ENCODE measurements at regions of chr2 and their contacts with region 1.

Region 1: DNA sequence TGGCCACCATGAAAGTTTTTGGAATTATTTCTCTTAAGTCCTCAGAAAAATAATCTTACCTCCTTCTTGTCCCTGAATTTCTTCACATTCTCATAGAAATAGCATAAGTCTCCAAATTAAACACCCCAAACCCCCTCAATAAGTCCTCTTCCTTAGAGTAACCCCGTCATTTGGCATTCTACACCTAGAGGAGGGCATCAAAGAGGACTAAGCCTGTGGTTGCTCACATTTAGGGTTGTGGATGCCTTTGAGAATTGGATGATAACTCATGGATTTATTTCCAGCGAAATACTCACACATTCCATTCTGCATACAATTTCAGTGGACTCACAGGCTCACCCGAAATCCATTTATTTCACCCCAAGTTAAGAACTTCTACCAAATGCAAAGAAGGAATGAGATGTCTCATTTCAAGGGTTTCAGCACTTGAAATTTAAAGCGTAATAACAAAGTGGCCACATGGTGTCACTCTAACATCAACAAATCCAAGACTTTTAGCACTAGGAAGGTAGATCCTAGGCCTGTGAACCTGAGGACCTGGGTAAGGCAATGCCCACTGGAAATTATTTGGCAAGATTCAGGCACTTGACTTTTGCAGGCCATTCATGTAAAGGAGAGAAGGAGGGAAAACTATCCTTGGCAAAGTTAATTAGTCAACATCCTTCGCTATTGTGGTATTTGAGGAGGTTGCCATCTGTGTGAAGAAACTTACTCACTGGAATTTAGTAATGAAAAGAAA is 24.6 kb downstream of the DYTN start:
- DNase-seq: peak; percentile 69
- H3K4me3 ChIP-seq: no peak overlapping the region
- H3K27ac ChIP-seq: no peak overlapping the region
- H3K4me1 ChIP-seq: no peaks in the 10 kb centered on the region
- H3K27me3 ChIP-seq: peaks cover 22% of the 10 kb centered on the region
- CTCF ChIP-seq: peak; percentile 71

Region 2: GRCh38 chr2:206783718-206784117 is 90.2 kb after region 1 on chr2:
- CTCF ChIA-PET with region 1: no interaction called
- POLR2A ChIA-PET with region 1: no interaction called
- intact Hi-C with region 1: loop called (anchors 2 kb)
- DNase-seq: peak; percentile 13
- H3K4me3 ChIP-seq: no peak overlapping the region
- H3K27ac ChIP-seq: no peak overlapping the region
- H3K4me1 ChIP-seq: no peaks in the 10 kb centered on the region
- H3K27me3 ChIP-seq: no peaks in the 10 kb centered on the region
- CTCF ChIP-seq: peak; percentile 45

Region 3: GRCh38 chr2:206981739-206982340 is 288.3 kb after region 1 on chr2:
- CTCF ChIA-PET with region 1: no interaction called
- POLR2A ChIA-PET with region 1: no interaction called
- intact Hi-C with region 1: loop called (anchors 5 kb)
- DNase-seq: peak; percentile 65
- H3K4me3 ChIP-seq: no peak overlapping the region
- H3K27ac ChIP-seq: no peak overlapping the region
- H3K4me1 ChIP-seq: no peaks in the 10 kb centered on the region
- H3K27me3 ChIP-seq: peaks cover 38% of the 10 kb centered on the region
- CTCF ChIP-seq: peak; percentile 71

Region 4: GRCh38 chr2:207283356-207283755 is 589.8 kb after region 1 on chr2:
- CTCF ChIA-PET with region 1: no interaction called
- POLR2A ChIA-PET with region 1: no interaction called
- intact Hi-C with region 1: loop called (anchors 10 kb)
- DNase-seq: no peak
- H3K4me3 ChIP-seq: no peak overlapping the region
- H3K27ac ChIP-seq: no peak overlapping the region
- H3K4me1 ChIP-seq: no peaks in the 10 kb centered on the region
- H3K27me3 ChIP-seq: no peaks in the 10 kb centered on the region
- CTCF ChIP-seq: no peak

Region 5: GRCh38 chr2:208072250-208072892 is 1378.8 kb after region 1 on chr2:
- CTCF ChIA-PET with region 1: no interaction called
- POLR2A ChIA-PET with region 1: no interaction called
- intact Hi-C with region 1: loop called (anchors 10 kb)
- DNase-seq: peak; percentile 60
- H3K4me3 ChIP-seq: no peak overlapping the region
- H3K27ac ChIP-seq: no peak overlapping the region
- H3K4me1 ChIP-seq: peaks cover 4% of the 10 kb centered on the region
- H3K27me3 ChIP-seq: no peaks in the 10 kb centered on the region
- CTCF ChIP-seq: peak; percentile 84